Gastrocnemius medialis (tissue), 4 donors: ENCODE measurements at regions of chr22 and their contacts with region 1.

Region 1: DNA sequence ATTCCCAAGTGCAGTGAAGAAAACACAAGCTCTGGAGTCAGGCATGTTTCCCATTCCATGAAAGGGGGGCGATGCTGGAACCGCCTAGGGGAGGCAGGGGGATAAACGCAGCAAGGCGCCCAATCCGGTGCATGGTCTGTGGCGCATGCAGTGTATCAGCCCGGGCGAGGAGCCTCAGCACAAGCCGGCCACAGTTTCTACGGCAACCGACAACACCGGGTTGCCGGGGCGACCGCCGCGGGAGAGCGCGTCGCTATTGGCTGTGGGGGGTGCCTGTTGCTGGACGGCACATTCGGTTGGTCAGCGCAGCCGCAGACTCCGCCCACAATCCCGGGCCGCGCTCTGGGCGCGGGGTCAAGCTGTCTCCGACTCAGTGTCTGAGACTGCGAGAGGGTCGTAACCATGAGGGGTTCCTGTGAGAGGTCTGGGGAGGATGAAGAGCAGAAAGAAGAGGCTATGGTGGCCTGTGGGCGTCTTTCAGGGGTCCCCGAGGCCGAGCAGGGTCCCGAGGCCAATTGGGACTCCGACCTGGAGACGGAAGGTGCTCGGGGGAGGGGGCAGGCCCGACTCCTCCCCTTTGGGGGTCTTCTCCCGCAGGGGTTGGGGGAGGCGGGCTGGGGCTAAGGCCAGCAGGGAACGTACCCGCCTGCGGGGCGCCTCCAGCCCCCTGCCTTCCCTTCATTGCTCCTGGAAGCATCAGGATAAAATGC is at the start of gene LRRC74B:
- DNase-seq: peak; percentile 81 to 88
- ATAC-seq: peak; percentile 77 to 82
- H3K4me3 ChIP-seq: peak within 1 kb of the TSS; percentile 55 to 78 (median 69)
- H3K27ac ChIP-seq: peak within 1 kb of the TSS; percentile 71 to 91 (median 89)
- H3K4me1 ChIP-seq: peaks cover 23 to 24% of the 10 kb centered on the region in 2 donors
- H3K27me3 ChIP-seq: no peaks in the 10 kb centered on the region
- CTCF ChIP-seq: no peak
- POLR2A ChIP-seq: no peak
- total RNA-seq, gene LRRC74B: not detected

Region 2: DNA sequence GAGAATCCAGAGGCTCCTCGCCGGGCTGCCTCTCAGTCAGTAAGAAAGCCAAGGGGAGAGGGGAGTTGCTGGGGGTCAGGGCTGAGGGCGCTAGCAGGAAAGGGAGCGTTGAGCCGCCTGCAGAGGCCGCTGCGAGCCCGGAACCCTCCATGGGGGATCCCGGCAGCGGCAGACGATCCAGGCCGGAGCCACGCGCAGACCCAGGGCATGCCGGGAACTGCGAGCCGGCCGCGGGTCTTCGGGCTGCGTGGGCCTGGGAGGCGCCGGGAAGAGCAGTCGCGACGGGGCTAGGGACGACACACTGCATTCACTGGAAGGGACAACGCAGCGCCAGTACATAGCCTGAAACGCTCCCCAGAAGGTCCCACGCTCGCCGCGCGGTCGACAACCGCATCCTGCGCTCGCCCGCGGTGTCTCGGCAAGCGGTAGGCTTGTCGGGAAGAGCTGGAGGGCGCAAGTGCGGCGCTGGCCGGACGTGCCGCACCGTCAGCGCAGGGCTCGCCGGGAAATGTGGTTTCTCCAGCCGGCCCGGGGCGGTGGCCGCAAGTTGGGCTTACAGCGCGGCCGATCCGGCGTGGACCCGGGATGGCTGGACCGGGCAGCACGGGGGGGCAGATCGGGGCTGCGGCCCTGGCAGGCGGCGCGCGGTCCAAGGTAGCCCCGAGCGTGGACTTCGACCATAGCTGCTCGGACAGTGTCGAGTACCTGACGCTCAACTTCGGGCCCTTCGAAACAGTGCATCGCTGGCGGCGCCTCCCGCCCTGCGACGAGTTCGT is 63.8 kb before region 1 on chr22 and contains the start of gene LZTR1:
- in situ Hi-C with region 1: no loop called
- intact Hi-C with region 1: loop called (anchors 1 kb)
- DNase-seq: peak; percentile 73 to 75
- ATAC-seq: peak; percentile 93 to 95
- H3K4me3 ChIP-seq: peak within 1 kb of the TSS; percentile 80 to 97 (median 89)
- H3K27ac ChIP-seq: peak within 1 kb of the TSS; percentile 91 to 94 (median 93)
- H3K4me1 ChIP-seq: peaks cover 24 to 33% of the 10 kb centered on the region in 2 donors
- H3K27me3 ChIP-seq: no peaks in the 10 kb centered on the region
- CTCF ChIP-seq: peak; percentile 34 to 78 (median 71)
- POLR2A ChIP-seq: peak; percentile 93 to 94
- total RNA-seq, gene LZTR1: 25.4 to 36.4 (median 26.3) TPM